H1 (cell line): ENCODE measurements at regions of chr2 and their contacts with region 1.

Region 1: DNA sequence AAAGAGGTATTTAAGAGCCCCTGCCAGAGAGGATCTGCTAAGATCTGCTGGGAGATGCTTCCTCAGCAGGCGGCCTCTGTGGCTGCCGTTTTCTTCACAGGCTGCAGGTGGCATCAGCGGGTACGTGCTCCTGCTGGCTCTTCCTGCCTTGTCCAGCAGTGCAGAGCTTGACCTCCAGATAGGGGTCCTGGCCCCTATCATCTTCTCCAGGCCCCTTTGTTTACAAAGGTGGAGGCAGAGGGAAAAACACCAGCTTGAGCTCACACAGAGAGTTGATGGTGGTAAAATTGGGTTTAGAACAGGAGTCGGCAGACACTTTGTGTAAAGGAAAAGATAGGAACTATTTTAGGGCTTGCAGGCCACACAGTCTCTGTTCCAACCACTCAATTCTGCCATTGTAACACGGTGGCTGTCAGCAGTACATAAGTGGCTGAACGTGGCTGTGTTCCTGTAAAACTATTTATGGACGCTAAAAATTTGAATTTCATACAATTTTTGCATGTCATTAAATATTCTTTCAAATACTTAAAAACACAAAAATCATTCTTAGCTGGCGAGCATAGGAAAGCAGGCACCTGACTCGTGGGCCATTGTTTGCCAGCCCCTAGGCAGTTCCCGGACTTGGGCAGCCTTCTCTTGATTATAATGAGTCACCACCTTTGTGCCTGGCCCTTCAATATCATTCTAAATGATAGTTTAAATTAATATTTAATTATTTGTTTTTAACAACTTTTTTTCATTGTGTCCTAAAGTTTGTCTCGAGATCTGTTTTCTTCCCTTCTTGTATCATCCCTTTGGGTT is 98.2 kb upstream of the B3GNT7 start:
- DNase-seq: peak; percentile 31 to 77
- H3K4me3 ChIP-seq: no peak overlapping the region
- H3K27ac ChIP-seq: no peak overlapping the region
- H3K4me1 ChIP-seq: peaks cover 0 to 9% (median 3%) of the 10 kb centered on the region in 4 experiments; a peak in 2 of 7 replicates
- H3K27me3 ChIP-seq: no peaks in the 10 kb centered on the region
- CTCF ChIP-seq: peak; percentile 89 to 96 (median 90)
- EP300 ChIP-seq: no peak
- POLR2A ChIP-seq: no peak
- RAD21 ChIP-seq: peak; percentile 84

Region 2: GRCh38 chr2:231084565-231084964 is 212.7 kb before region 1 on chr2:
- CTCF ChIA-PET with region 1: no interaction called
- POLR2A ChIA-PET with region 1: no interaction called
- DNase-seq: no peak
- H3K4me3 ChIP-seq: no peak overlapping the region
- H3K27ac ChIP-seq: no peak overlapping the region
- H3K4me1 ChIP-seq: no peaks in the 10 kb centered on the region
- H3K27me3 ChIP-seq: no peaks in the 10 kb centered on the region
- CTCF ChIP-seq: no peak
- EP300 ChIP-seq: no peak
- POLR2A ChIP-seq: no peak
- RAD21 ChIP-seq: no peak

Region 3: DNA sequence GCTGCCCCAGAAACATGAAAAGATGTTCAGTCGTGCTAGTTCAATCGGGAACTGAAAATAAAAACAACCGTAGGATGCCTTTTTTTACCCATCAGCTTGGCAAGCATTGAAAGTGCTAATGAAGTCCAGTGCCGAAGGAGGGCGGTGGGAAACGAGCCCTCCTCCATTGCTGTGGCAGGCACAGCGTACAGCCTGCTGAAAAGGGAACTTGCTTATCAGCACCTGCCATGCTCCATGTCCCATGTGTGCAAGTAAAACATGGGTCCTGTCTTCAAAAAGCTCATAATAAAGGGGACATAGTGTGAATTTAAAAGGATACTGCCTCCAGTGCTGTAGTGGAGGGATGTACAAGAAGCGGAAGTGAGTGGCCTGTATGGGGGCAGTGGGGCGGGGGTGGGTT is 16.5 kb before region 1 on chr2:
- CTCF ChIA-PET with region 1: interaction called, 17 read pairs
- POLR2A ChIA-PET with region 1: interaction called, 3 read pairs
- DNase-seq: no peak
- H3K4me3 ChIP-seq: no peak overlapping the region
- H3K27ac ChIP-seq: no peak overlapping the region
- H3K4me1 ChIP-seq: no peaks in the 10 kb centered on the region
- H3K27me3 ChIP-seq: no peaks in the 10 kb centered on the region
- CTCF ChIP-seq: no peak
- EP300 ChIP-seq: no peak
- POLR2A ChIP-seq: no peak
- RAD21 ChIP-seq: no peak

Region 4: DNA sequence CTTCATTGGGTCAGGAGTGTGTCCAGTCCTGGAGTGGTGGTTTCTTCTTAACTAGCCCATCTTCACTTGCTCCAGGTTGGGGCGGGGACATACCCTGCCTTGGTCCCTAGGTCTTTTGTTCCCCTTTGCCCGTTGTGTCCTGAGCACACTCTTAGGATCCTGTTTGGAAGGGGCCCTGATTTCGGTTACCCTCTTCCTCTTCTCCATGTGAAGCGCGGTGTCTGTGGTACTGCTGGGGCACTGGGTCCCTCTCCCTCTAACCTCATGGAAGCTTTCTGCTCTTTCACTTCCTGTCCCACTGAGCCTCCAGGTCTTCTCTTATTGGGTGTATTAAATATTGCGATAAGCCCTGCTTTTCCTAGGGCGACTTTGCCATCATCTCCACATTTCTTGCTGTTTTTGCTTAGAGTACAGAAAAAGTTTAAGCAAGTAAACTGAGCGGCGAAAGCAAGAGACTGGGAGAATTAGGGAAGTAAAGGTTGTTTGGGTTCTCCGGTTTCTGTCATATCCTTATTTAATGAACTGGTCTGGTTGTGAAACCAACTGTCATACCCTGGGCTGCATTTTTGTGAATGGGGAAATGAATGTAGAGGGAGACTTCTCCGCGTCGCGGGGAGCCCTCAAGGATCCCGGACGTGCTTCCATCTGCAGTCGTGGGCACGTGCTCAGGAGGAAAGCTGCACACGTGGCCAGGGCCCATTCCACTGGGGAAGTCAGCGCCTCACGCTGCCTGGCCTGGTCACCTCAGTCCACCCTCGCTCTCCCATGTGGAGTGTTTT is 24.4 kb after region 1 on chr2:
- CTCF ChIA-PET with region 1: interaction called, 20 read pairs
- POLR2A ChIA-PET with region 1: interaction called, 3 read pairs
- DNase-seq: peak in 1 of 2 experiments; percentile 29
- H3K4me3 ChIP-seq: no peak overlapping the region
- H3K27ac ChIP-seq: no peak overlapping the region
- H3K4me1 ChIP-seq: peaks cover 0 to 8% (median 1%) of the 10 kb centered on the region in 4 experiments; a peak in 2 of 7 replicates
- H3K27me3 ChIP-seq: no peaks in the 10 kb centered on the region
- CTCF ChIP-seq: no peak
- EP300 ChIP-seq: no peak
- POLR2A ChIP-seq: no peak
- RAD21 ChIP-seq: no peak

Region 5: GRCh38 chr2:231387904-231388724 is 90.8 kb after region 1 on chr2:
- CTCF ChIA-PET with region 1: interaction called, 37 read pairs
- POLR2A ChIA-PET with region 1: interaction called, 3 read pairs
- DNase-seq: no peak
- H3K4me3 ChIP-seq: no peak overlapping the region
- H3K27ac ChIP-seq: no peak overlapping the region
- H3K4me1 ChIP-seq: peaks cover 0 to 14% (median 9%) of the 10 kb centered on the region in 4 experiments; a peak in 6 of 7 replicates
- H3K27me3 ChIP-seq: no peaks in the 10 kb centered on the region
- CTCF ChIP-seq: no peak
- EP300 ChIP-seq: no peak
- POLR2A ChIP-seq: no peak
- RAD21 ChIP-seq: no peak

Region 6: DNA sequence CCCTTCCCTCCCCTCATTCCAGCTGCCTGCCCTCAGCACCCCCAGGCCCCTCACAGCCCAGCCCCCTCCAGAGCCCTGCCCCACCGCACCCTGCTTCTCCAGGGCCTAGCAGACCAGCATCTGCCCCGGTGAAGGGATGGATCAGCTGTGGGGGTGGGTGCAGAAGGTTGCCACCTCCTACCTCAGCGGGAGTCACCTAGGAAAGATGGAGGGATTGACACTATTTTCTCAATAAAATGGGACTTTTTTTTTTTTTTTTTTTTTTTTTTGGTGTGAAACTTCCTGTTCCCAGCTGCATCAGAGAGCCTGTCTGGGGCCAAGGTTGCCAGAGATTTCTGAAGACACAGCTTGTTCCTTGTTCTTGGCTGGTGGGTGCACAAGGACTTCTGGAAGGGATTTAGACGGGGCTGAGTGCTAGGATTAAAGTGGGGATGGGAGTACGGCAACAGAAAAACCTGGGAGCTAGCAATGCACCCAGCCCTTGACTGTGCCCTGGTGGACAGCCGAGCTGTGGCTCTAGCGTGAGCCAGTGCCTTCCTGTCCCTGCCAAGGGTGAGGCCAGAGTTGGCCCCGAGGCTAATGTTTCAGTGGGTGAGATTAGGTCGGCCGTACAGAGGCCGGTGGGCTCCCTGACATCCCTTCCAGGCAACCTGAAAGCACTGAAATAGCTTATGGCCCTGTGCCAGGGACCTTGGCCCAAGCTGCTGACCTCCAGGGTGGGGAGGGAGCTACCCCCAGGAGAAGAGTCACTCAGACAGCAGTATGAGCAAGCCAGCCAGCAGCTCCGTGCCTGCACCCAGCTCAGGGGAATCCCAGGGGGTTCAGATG is 102.8 kb after region 1 on chr2:
- CTCF ChIA-PET with region 1: interaction called, 37 read pairs
- POLR2A ChIA-PET with region 1: interaction called, 4 read pairs
- DNase-seq: peak in 1 of 2 experiments; percentile 54
- H3K4me3 ChIP-seq: no peak overlapping the region
- H3K27ac ChIP-seq: no peak overlapping the region
- H3K4me1 ChIP-seq: peaks cover 0 to 15% (median 12%) of the 10 kb centered on the region in 4 experiments; a peak in 6 of 7 replicates
- H3K27me3 ChIP-seq: no peaks in the 10 kb centered on the region
- CTCF ChIP-seq: no peak
- EP300 ChIP-seq: no peak
- POLR2A ChIP-seq: no peak
- RAD21 ChIP-seq: no peak